ENCODE measurements at regions of chr7 and their contacts with region 1.

Region 1: DNA sequence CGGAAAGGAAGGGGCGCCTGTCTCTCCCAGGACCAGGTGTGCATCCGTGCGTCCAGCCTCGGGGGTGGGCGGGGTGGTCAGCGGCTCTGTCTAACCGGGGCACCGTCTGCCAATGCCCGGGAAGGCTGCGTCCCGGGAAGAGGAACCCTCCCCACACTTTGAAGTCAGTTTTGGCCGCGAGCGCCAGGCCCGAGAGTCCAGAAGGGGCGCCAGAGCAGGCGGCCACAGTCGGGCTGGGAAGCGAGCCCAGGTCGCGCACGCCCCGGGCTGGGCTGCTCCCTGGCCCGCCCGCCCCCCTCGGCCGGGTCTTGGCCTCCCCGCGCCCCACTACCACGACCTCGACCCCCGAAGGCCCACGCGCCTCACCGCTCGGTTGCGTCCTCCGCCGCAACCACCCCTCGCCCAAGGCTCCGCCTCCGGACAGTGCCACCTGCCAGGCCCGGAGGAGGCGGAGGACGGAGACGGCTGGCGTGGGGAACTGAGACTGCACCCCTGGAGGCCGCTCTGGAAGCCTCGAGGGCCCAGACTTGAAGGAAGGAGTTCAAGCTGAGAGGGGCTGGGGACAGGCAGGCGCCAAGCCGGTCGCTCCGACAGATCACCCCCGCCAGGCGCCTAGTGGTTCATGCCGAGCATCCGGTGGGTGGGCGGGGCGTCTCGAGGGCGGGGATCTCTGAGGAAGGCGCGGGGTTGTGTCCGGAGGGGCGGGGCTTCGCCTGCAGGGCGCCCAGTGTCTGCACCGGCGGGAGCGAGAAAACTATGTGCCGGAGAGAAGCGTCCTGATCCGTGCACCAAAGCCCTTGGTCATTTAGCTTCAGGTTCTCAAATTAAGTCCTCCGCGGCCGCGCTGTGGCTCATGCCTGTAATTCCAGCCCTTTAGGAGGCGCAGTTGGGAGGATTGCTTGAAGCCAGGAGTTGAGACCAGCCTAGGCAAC is at the start of gene BRAT1:
- DNase-seq: peak; percentile 97
- H3K4me3 Mint-ChIP-seq: peak within 1 kb of the TSS; percentile 90
- H3K27ac Mint-ChIP-seq: peak within 1 kb of the TSS; percentile 92
- H3K4me1 Mint-ChIP-seq: peaks cover 29% of the 10 kb centered on the region
- H3K27me3 Mint-ChIP-seq: no peaks in the 10 kb centered on the region
- total RNA-seq, gene BRAT1: 39.5 and 40.9 TPM in 2 replicates

Region 2: DNA sequence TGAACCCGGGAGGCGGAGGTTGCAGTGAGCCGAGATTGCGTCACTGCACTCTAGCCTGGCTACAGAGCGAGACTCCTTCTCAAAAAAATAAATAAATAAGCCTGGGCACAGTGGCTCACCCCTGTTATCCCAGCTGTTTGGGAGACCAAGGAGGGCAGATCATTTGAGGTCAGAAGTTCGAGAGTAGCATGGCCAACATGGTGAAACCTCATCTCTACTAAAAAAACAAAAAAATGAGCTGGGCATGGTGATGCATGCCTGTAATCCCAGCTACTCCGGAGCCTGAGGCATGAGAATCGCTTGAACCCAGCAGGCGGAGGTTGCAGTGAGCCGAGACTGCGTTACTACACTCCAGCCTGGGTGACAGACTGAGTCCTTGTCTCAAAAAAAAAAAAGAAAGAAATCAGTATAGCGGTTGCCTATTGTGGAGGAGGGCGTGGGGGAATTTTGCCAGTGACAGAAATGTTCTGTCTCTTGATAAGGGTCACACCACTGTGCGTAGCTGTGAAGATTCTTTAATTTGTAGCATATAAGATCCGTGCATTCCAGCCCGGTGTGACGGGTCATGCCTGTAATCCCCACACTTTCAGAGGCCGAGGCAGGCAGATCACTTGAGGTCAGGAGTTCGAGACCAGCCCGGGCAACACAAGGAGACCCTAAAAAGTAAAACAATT is 218.6 kb before region 1 on chr7:
- intact Hi-C with region 1: no loop called
- DNase-seq: no peak
- H3K4me3 Mint-ChIP-seq: no peak overlapping the region
- H3K27ac Mint-ChIP-seq: no peak overlapping the region
- H3K4me1 Mint-ChIP-seq: no peaks in the 10 kb centered on the region
- H3K27me3 Mint-ChIP-seq: no peaks in the 10 kb centered on the region

Region 3: DNA sequence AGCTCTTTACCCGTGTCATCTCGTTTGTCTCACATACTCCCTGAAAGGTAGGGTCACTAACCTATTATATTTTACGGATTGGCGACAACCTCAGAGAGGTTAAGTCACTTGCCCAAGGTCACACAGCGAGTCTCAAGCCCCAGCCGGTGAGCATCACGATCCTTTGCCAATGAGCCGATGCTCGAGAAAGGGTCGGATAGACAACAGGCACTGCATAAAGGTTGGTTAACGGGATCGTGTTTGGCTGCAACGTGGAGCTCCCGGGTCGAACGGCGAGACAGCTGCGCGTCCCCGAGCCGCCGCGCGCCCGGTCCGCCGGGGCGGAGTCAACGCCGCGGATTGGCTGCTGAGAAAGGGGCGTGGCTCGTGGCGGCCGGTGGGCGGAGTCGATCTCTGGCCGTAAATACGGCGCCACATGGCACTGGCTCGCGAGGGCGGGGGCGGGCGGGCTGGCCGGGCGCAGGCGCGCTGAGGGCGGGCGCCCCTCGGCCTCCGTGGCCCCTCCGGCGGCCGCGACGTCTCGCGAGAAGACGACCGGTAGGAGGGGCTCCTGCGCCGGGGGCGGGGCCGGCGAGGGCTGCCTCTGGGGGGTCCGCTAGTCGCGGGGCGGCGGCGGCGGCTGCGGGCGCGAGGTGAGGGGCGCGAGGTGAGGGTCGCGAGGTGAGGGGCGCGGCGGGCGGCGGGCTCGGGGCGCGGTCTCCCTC is 152.2 kb before region 1 on chr7 and contains the start of gene CHST12:
- intact Hi-C with region 1: loop called (anchors 5 kb)
- DNase-seq: peak; percentile 99
- H3K4me3 Mint-ChIP-seq: peak within 1 kb of the TSS; percentile 91
- H3K27ac Mint-ChIP-seq: peak within 1 kb of the TSS; percentile 85
- H3K4me1 Mint-ChIP-seq: peaks cover 47% of the 10 kb centered on the region
- H3K27me3 Mint-ChIP-seq: no peaks in the 10 kb centered on the region
- total RNA-seq, gene CHST12: 5.8 and 6.4 TPM in 2 replicates

Region 4: GRCh38 chr7:2477447-2478398 is 77.7 kb before region 1 on chr7:
- intact Hi-C with region 1: loop called (anchors 1 kb)
- DNase-seq: peak; percentile 91
- H3K4me3 Mint-ChIP-seq: no peak overlapping the region
- H3K27ac Mint-ChIP-seq: no peak overlapping the region
- H3K4me1 Mint-ChIP-seq: peaks cover 3% of the 10 kb centered on the region
- H3K27me3 Mint-ChIP-seq: peaks cover 2% of the 10 kb centered on the region

Region 5: GRCh38 chr7:2508327-2509215 is 46.8 kb before region 1 on chr7:
- intact Hi-C with region 1: loop called (anchors 10 kb)
- DNase-seq: peak; percentile 93
- H3K4me3 Mint-ChIP-seq: peak overlapping the region; percentile 67
- H3K27ac Mint-ChIP-seq: peak overlapping the region; percentile 81
- H3K4me1 Mint-ChIP-seq: peaks cover 39% of the 10 kb centered on the region
- H3K27me3 Mint-ChIP-seq: no peaks in the 10 kb centered on the region

Region 6: GRCh38 chr7:2529161-2530070 is 26.0 kb before region 1 on chr7:
- intact Hi-C with region 1: loop called (anchors 1 kb)
- DNase-seq: peak; percentile 87
- H3K4me3 Mint-ChIP-seq: peak overlapping the region; percentile 83
- H3K27ac Mint-ChIP-seq: peak overlapping the region; percentile 98
- H3K4me1 Mint-ChIP-seq: peaks cover 42% of the 10 kb centered on the region
- H3K27me3 Mint-ChIP-seq: no peaks in the 10 kb centered on the region

Region 7: DNA sequence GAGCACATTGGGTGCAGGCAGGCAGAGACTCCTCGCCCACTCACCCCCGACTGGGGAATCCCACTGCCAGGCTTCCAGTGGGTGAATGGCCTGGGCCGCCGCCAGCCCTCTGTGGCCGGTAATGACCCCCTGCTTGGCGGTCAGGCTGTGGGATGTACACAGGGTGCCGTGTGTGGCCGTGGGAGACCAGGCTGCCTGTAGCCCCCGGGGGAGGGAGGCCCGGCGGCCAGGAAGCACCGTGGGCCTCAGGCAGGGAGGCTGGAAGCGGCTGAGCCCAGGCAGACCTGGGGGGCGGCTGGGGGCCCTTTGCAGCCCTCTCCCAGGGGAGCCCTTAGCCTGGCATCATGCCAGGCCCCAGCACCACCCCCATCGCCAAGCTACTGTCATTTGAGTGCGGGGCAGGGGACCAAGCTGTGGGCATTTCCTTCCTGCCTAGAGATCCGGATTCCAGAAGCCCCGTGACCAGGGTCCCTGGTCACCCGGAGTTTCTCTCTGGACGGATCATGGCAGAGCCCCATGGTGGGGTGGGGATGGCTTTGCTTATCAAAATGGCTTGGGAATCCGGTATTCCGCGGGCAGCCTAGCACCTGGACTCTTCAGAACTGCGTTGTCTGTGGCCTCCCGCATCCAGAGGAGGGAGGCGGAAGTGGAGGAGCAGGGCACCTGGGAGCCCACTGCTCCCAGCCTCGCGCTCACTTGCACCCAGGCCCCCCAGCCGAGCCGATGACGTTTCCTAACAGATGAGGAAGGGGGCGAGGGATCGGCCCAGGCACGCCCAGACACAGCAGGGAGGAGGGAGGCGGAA is 77.5 kb after region 1 on chr7:
- intact Hi-C with region 1: loop called (anchors 1 kb)
- DNase-seq: peak; percentile 81
- H3K4me3 Mint-ChIP-seq: peak overlapping the region; percentile 96
- H3K27ac Mint-ChIP-seq: peak overlapping the region; percentile 91
- H3K4me1 Mint-ChIP-seq: peaks cover 17% of the 10 kb centered on the region
- H3K27me3 Mint-ChIP-seq: peaks cover 1% of the 10 kb centered on the region